GM10248 (cell line): ENCODE measurements at regions of chr3 and their contacts with region 1.

Region 1: DNA sequence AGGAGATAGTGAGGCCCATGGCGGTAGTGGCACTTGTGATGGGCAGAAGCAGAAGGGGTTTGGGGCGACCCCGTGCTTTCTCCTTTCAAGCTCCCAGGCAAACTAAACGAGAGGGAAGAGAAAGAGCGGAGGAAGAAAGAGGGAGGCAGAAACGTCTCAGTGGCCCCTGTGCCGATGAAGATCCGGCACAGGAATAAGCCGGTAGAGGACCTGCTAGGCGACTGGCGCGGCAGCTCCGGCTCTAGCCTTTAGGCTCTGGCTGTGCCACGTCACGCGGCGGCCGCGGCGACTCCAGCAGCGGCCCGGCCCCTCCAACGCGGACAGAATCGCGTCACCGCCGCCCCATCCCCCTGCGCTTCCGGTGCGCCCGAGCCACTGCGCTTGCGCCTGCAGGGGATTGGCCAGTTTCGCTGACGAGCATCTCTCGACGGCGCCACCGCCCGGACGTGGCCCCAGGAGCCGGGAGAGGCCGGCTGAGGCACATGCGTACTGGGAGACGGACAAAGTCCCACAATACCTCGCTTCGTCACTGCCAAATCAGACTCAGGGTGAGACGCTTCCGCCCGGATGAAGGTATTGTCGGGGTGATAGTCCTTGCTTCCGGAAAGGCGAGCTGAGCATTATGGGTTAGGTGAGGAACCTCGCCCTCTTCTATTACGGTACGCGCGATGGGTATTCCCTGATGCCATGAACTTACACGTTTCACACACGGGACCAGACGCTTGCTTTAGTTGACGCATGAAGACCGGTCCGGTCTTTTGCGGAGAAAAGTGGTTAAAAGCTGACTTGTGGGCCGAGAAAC is at the start of gene ARF4:
- DNase-seq: peak; percentile 98
- CTCF ChIP-seq: peak; percentile 31

Region 2: DNA sequence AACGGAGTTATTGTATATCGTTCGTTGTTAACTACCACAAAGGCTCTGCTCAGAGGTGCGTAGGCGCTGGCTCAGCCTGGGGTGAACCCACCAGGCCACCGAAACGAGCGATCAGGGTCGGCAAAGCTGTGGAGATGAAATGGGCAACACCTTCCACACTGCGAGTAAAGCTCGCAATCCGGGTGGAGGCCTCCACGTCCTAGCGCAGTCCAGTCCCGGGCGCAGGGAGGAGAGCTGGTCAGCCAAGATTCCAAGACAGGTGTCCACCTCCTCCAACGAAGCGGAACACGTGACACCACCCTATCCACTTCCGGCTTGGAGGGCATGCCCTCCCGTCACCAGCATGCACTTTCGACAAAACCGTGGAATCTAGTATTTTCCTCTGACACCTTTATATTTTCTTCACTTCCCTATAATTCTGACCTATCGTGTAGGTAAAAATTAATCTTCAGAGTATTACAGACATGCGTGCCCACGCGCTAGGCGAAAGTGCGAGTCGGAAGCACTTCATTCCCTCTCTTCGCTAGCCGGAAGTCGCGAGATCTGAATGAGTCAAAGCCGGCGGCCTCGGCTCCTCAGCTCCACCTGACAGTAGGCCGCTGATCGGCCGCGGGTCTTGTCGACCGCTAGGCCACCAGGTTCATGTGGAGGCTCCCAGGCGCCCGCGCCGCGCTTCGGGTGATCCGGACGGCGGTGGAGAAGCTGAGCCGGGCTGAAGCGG is 41.4 kb before region 1 on chr3 and contains the start of gene PDE12:
- CTCF ChIA-PET with region 1: interaction called, 3 read pairs
- POLR2A ChIA-PET with region 1: interaction called, 11 read pairs
- DNase-seq: peak; percentile 88
- CTCF ChIP-seq: no peak

Region 3: GRCh38 chr3:57582474-57583168 is 14.7 kb before region 1 on chr3:
- CTCF ChIA-PET with region 1: interaction called, 3 read pairs
- POLR2A ChIA-PET with region 1: interaction called, 10 read pairs
- DNase-seq: no peak
- CTCF ChIP-seq: no peak

Region 4: DNA sequence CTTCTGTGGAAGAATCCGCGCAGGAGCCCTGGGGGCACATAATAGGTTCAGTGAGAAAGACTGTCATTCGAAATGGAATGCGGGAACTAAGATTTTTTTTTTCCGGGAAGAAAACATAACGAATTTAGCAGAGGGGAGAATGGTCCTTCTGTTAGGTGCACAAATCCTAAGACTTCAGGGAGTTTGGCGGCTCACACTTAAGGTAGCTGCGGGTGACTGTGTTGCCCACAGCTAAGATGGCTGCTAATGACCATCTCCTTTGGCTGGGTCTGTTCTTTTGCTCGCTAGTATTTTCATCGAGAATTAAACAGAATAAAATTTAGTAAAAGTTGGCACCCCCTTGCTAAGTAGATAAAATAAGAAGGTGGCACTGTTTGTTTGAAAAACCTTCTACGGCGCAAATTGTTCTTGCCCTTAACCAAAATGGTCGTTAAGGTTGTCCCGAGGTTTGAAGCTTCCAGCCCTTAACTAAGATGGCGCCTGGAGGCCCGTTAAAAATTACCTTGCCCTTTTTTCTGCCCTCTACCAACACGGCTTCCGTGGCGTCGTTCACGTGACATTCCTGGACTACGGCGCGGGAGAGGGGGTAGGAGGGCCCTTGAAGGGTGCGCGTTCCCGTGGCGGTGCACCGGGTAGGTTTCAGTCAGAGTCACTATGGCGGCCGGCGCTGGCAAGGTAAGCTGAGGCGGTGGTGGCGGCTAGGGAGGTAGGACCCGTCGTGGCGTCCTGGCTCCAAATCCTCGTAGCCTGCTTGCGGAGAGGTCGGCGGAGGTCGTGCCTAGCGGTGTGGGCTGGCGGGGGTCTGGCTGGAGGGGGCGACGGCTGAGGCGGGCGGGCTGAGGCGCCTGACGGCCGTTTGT is 158.6 kb after region 1 on chr3 and contains the start of gene SLMAP:
- CTCF ChIA-PET with region 1: no interaction called
- POLR2A ChIA-PET with region 1: interaction called, 17 read pairs
- DNase-seq: peak; percentile 94
- CTCF ChIP-seq: no peak